ENCODE measurements at regions of chr4 and their contacts with region 1.

Region 1: GRCh38 chr4:80459918-80460473 is 124.5 kb downstream of the CFAP299 start:
- DNase-seq: no peak
- ATAC-seq: no peak
- H3K4me3 ChIP-seq: no peak overlapping the region
- H3K27ac ChIP-seq: no peak overlapping the region
- H3K4me1 ChIP-seq: peaks cover 35% of the 10 kb centered on the region
- H3K27me3 ChIP-seq: no peaks in the 10 kb centered on the region
- CTCF ChIP-seq: 0 out of 2 replicates have a peak, but pooled peaks have one; percentile 9

Region 2: DNA sequence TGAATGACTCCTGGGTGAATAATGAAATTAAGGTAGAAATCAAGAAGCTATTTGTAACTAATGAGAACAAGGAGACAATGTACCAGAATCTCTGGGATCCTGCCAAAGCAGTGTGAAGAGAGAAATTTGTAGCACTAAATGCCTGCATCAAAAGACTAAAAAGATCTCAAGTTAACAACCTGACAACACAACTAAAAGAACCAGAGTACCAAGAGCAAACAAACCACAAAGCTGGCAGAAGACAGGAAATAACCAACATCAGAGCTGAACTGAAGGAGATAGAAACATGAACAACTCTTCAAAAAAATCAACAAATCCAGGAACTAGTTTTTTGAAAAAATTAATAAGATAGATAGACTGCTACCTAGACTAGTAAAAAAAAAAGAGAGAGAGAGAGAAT is 116.1 kb before region 1 on chr4:
- CTCF ChIA-PET with region 1: no interaction called
- POLR2A ChIA-PET with region 1: no interaction called
- intact Hi-C with region 1: no loop called
- DNase-seq: no peak
- ATAC-seq: no peak
- H3K4me3 ChIP-seq: no peak overlapping the region
- H3K27ac ChIP-seq: no peak overlapping the region
- H3K4me1 ChIP-seq: no peaks in the 10 kb centered on the region
- H3K27me3 ChIP-seq: no peaks in the 10 kb centered on the region
- CTCF ChIP-seq: no peak

Region 3: GRCh38 chr4:80446664-80447063 is 13.3 kb before region 1 on chr4:
- CTCF ChIA-PET with region 1: interaction called, 10 read pairs
- POLR2A ChIA-PET with region 1: no interaction called
- intact Hi-C with region 1: no loop called
- DNase-seq: peak; percentile 84
- ATAC-seq: peak; percentile 69
- H3K4me3 ChIP-seq: no peak overlapping the region
- H3K27ac ChIP-seq: peak overlapping the region; percentile 62
- H3K4me1 ChIP-seq: peaks cover 25% of the 10 kb centered on the region
- H3K27me3 ChIP-seq: no peaks in the 10 kb centered on the region
- CTCF ChIP-seq: no peak